WTC11 (cell line): ENCODE measurements at regions of chr1 and their contacts with region 1.

Region 1: GRCh38 chr1:38026592-38027200 is 14.2 kb downstream of the UTP11 start:
- DNase-seq: peak; percentile 74
- ATAC-seq: peak; percentile 19
- H3K4me3 Mint-ChIP-seq: no peak overlapping the region
- H3K27ac Mint-ChIP-seq: peak overlapping the region; percentile 57; the same call in 1 of the 2 replicates
- H3K4me1 Mint-ChIP-seq: peaks cover 54% of the 10 kb centered on the region
- H3K27me3 Mint-ChIP-seq: no peaks in the 10 kb centered on the region
- CTCF ChIP-seq: peak; percentile 62

Region 2: GRCh38 chr1:38141483-38141882 is 114.8 kb after region 1 on chr1:
- CTCF ChIA-PET with region 1: no interaction called
- POLR2A ChIA-PET with region 1: no interaction called
- DNase-seq: no peak
- ATAC-seq: peak; percentile 33
- H3K4me3 Mint-ChIP-seq: peak overlapping the region; percentile 21
- H3K27ac Mint-ChIP-seq: peak overlapping the region; percentile 6
- H3K4me1 Mint-ChIP-seq: peaks cover 48% of the 10 kb centered on the region
- H3K27me3 Mint-ChIP-seq: peaks cover 33% of the 10 kb centered on the region
- CTCF ChIP-seq: no peak

Region 3: DNA sequence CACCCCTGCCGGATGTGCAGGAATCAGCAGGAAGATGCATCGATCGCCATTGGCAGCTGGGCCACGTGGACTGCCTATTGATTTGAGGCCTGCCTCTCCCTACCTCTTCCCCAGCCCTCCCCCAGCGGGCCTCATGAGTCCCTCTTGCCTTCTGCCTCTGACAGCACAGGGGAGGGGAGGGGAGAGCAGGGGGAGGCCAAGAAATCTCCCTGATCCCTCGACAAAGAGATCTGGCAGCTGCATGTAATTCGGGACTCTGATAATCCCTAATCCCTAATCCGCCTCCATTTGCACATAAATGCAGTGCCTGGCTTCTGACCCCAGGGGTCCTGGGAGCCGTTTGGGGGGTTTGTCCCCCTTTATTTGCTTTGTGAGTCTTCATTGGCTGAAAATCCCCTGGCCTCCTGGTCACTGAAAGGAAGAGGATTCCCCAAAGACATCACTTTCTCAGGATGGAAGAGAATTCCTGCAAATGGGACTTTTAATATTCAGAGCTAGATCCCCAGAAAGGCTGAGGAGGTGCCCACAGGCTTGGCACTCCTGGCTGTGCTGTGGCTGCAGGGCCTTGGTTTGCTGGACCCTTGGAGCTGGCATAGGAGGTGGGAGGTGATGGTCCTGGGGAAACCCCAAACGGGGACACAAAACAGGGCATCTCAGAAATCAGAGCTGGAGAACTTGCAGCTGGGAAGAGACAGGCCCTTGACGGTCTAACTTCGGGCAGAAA is 259.3 kb after region 1 on chr1:
- CTCF ChIA-PET with region 1: interaction called, 11 read pairs
- POLR2A ChIA-PET with region 1: no interaction called
- DNase-seq: peak; percentile 38
- ATAC-seq: peak; percentile 78
- H3K4me3 Mint-ChIP-seq: no peak overlapping the region
- H3K27ac Mint-ChIP-seq: no peak overlapping the region
- H3K4me1 Mint-ChIP-seq: peaks cover 48% of the 10 kb centered on the region
- H3K27me3 Mint-ChIP-seq: no peaks in the 10 kb centered on the region; the same call in 1 of the 2 replicates
- CTCF ChIP-seq: no peak

Region 4: GRCh38 chr1:38512789-38513188 is 486.1 kb after region 1 on chr1:
- CTCF ChIA-PET with region 1: interaction called, 11 read pairs
- POLR2A ChIA-PET with region 1: no interaction called
- DNase-seq: no peak
- ATAC-seq: no peak
- H3K4me3 Mint-ChIP-seq: no peak overlapping the region
- H3K27ac Mint-ChIP-seq: no peak overlapping the region
- H3K4me1 Mint-ChIP-seq: peaks cover 30% of the 10 kb centered on the region
- H3K27me3 Mint-ChIP-seq: no peaks in the 10 kb centered on the region
- CTCF ChIP-seq: no peak

Region 5: DNA sequence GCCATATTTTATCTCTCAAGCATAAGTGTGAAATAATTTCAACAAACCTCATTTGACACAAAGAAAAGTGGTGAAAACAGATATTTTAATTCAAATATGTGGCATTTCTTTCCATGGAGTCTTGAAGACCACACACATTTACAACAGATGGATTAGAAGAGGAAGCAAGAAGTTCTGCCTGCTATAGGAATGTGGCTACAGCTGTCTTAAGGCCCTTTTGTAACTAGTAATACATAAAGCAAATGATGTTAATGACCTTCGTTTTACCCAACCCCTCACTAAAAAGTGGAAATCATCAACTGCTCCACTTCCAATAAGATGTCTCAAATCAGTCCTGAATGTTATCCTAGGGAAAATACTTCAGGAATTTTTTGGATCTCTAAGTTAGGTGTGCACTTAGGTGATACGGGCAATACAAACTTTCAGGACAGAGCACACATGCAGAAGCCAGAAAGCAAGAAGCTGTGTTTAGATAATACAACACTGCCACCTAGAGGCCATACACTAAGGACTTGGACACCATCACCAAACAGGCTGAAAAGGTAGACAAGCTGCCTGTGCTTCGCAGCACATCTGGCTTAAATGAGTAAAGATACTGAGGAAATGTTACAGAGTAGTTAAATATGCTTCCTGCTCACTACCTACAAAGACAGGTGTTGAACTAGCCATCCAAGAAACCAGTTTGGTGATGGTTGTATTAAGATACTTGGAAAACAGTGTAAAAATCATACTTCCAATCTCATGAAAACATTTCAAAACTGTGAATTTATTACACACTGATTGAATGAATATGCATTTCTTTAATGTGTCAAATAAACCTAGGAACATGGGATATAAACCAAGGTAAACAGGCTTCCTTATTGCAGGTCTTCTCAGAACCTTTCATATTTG is 808.5 kb after region 1 on chr1:
- CTCF ChIA-PET with region 1: interaction called, 13 read pairs
- POLR2A ChIA-PET with region 1: no interaction called
- DNase-seq: peak; percentile 37
- ATAC-seq: peak; percentile 87
- H3K4me3 Mint-ChIP-seq: no peak overlapping the region
- H3K27ac Mint-ChIP-seq: no peak overlapping the region
- H3K4me1 Mint-ChIP-seq: peaks cover 22% of the 10 kb centered on the region
- H3K27me3 Mint-ChIP-seq: no peaks in the 10 kb centered on the region
- CTCF ChIP-seq: peak; percentile 68